ENCODE measurements at regions of chr3 and their contacts with region 1.

Region 1: DNA sequence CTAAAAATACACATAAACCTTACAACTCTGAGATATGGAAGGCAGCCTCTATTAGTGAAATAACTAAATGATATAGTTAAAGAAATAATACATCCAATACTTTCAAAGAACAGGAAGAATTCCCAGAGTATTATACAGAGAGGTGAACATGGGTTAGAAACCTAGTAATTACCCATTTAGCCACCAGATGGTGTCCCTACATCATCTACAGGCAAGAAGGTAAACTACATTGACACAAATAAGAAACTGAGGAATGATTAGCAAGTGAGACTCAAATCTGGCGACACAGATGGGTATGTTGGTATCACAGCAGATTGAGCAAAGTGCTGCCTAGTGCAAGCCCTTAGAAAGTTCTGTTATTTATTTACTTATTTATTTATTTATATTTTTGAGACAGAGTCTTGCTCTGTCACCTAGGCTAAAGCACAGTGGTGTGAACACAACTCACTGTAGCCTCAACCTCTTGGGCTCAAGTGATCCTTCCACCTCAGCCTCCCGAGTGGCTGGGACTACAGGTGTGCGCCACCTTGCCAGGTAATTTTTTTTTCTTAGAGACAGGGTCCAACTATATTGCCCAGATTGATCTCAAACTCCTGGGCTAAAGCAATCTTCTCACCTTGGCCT is 28.2 kb downstream of the NEK4 start:
- DNase-seq: no peak
- H3K4me3 ChIP-seq: no peak overlapping the region
- H3K27ac ChIP-seq: no peak overlapping the region
- H3K4me1 ChIP-seq: no peaks in the 10 kb centered on the region
- H3K27me3 ChIP-seq: no peaks in the 10 kb centered on the region
- CTCF ChIP-seq: peak; percentile 35 to 49 (median 42)
- EP300 ChIP-seq: no peak
- POLR2A ChIP-seq: no peak

Region 2: DNA sequence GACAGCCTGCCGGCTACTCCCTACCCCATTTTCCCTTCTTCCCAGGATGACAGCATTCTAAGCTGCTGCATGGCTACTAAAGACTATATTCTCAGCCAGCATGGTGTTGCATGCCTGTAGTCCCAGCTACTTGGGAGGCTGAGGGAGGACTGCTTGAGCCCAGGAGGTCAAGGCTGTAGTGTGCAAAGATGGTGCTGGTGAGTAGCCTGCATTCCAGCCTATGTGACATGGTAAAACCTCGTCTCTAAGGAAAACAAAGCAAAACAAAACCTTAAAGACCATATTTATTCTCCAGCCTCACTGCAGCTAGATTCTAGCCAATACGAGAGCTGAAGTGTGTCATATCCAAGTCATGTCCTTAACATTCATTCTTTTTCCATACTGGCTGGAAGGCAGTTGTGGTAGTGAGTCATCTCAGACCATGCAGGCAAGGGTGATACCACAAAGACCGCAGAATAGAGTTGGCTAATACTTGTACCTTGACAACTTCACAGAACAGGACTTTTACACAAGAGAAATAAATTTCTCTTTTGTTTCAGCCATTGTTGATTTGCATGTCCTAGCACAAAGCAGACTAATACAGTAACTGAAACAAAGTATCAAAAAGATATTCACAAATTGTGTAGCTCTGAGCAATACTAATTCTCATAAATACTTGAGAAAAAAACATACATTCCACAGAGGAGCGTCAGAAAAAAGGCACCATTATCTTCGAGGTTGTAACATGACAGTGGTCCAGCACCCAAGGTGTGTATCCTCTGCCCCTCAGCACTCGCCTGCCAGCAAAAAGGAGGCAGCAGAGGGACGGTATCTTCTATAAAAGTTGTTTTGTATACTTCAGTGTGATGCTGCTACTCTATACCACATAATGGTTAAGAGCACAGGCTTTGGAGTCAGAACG is 71.7 kb before region 1 on chr3:
- intact Hi-C with region 1: no loop called
- DNase-seq: no peak
- H3K4me3 ChIP-seq: no peak overlapping the region
- H3K27ac ChIP-seq: peak overlapping the region; percentile 52 to 71 (median 56)
- H3K4me1 ChIP-seq: peaks cover 12 to 23% (median 18%) of the 10 kb centered on the region in 4 donors
- H3K27me3 ChIP-seq: no peaks in the 10 kb centered on the region
- CTCF ChIP-seq: no peak
- EP300 ChIP-seq: no peak
- POLR2A ChIP-seq: no peak

Region 3: DNA sequence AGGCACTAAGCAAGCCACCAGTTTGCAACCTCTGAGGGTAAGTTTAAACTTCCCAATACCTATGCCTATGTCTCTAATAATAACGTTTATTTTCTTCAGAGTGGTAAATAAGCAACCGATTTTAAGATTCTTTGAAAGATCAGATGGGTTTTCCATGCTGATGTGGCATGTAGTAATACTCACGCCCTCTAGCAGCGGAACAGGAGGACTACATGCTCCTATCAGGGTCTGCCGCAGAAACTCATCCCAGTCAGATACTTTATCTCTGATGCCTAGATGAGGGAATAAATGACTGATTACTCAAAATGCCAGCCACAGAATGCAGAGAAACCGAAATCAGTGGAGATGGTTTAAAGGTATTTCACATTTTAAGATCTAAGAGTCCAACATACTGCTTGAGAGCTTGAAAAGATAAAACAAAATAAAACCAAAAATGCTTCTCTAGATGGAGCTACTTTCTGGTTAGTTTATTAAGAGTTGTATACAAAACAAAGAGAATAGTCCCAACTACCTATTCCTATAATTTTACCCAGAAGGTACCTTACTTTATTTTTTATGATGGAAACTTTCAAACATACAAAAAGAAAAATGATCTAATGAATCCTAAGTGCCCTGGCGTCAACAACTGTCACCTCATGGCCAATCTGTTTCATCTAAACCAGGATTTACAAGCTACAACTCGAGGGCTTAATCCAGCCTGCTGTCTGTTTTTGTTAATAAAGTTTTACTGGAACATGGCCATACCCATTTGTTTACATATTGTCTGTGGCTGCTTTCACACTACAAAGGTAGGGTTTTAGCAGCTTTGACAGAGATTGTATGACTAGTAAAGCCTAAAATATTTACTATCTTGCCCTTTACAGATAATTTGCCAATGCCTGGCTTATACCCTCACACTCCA is 192.3 kb after region 1 on chr3:
- intact Hi-C with region 1: loop called (anchors 5 kb)
- DNase-seq: no peak
- H3K4me3 ChIP-seq: no peak overlapping the region
- H3K27ac ChIP-seq: no peak overlapping the region
- H3K4me1 ChIP-seq: peaks cover 0 to 4% (median 0%) of the 10 kb centered on the region in 4 donors
- H3K27me3 ChIP-seq: no peaks in the 10 kb centered on the region
- CTCF ChIP-seq: peak; percentile 59 to 82 (median 78)
- EP300 ChIP-seq: no peak
- POLR2A ChIP-seq: no peak